ENCODE measurements at regions of chr3 and their contacts with region 1.

Region 1: GRCh38 chr3:177005718-177006405 is 191.4 kb downstream of the TBL1XR1 start:
- DNase-seq: no peak
- H3K4me3 ChIP-seq: no peak overlapping the region
- H3K27ac ChIP-seq: no peak overlapping the region
- H3K4me1 ChIP-seq: no peaks in the 10 kb centered on the region
- H3K27me3 ChIP-seq: no peaks in the 10 kb centered on the region
- CTCF ChIP-seq: no peak

Region 2: GRCh38 chr3:177263615-177264368 is 257.9 kb after region 1 on chr3:
- CTCF ChIA-PET with region 1: no interaction called
- POLR2A ChIA-PET with region 1: interaction called, 17 read pairs
- intact Hi-C with region 1: no loop called
- DNase-seq: no peak
- H3K4me3 ChIP-seq: no peak overlapping the region
- H3K27ac ChIP-seq: no peak overlapping the region
- H3K4me1 ChIP-seq: no peaks in the 10 kb centered on the region
- H3K27me3 ChIP-seq: no peaks in the 10 kb centered on the region
- CTCF ChIP-seq: no peak